Caco-2 (cell line): ENCODE measurements at regions of chr5 and their contacts with region 1.

Region 1: DNA sequence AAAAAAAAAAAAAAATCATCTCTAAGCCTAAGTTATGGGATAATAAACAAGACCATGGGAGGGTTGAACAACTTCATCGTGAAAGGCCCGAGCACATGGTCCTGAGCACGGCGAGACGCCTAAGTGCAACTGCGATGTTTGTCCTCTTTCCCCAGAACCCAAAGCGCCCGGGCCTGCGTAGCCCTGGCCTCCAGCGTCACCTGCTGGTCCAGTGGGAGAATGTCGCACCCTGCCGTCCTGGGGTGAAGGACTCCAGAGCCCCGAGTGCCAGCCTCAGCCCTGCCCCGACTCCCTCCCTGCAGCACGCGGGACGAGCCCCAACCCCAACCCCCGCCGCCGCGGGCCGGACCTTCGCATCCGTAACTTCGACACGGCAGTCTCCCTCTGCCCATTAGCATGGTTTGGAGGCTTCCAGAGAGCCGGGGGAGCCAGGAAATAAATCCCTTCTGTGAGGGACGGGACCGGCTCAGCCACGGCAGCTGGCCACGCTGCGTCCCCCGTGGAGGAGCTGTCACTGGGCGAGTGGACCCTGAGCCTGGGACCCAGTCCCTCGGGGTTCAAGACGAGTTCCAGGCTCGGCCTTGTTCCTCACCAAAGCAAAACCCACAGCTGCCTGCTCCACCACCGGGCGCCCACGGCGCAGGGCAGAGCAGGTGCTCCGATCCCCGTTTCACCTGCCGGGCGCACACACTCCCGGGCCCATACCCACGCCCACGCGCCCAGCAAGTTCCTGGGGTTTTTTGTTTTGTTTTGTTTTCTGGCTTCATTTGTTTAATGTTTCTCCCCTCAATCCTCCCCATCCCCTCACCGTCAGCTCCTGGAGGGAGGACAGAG is 132.5 kb upstream of the HAND1 start:
- DNase-seq: peak; percentile 82 to 84
- H3K4me3 ChIP-seq: peak overlapping the region; percentile 33
- H3K4me3 Mint-ChIP-seq: peak overlapping the region; percentile 60
- H3K27ac Mint-ChIP-seq: no peak overlapping the region
- H3K4me1 ChIP-seq: peaks cover 19% of the 10 kb centered on the region
- H3K4me1 Mint-ChIP-seq: peaks cover 18% of the 10 kb centered on the region
- H3K27me3 ChIP-seq: no peaks in the 10 kb centered on the region; the same call in 1 of the 2 replicates
- H3K27me3 Mint-ChIP-seq: peaks cover 8% of the 10 kb centered on the region
- CTCF ChIP-seq: peak; percentile 95 to 99

Region 2: DNA sequence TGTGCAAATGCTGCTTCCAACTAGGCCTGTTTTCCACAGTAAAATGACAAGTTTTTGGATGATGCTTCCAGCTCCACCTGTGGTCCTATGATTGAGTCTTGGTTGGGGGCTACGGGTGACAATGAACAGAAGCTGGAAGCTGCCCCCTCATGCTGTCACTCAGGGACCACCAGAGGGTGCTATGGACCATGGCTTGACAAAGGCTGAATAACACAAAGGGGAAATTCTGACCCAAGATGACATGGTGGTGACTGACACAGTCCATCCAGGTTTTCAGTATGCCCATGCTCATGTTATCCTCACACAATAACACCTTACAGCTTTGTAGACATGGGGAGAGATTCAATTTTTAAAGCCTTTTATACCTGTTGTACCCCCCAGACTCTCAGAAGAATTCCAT is 188.7 kb before region 1 on chr5:
- CTCF ChIA-PET with region 1: interaction called, 3 read pairs
- POLR2A ChIA-PET with region 1: no interaction called
- intact Hi-C with region 1: loop called (anchors 1 kb)
- DNase-seq: peak in 1 of 2 experiments; percentile 54
- H3K4me3 ChIP-seq: no peak overlapping the region
- H3K4me3 Mint-ChIP-seq: no peak overlapping the region
- H3K27ac Mint-ChIP-seq: no peak overlapping the region
- H3K4me1 ChIP-seq: no peaks in the 10 kb centered on the region
- H3K4me1 Mint-ChIP-seq: no peaks in the 10 kb centered on the region
- H3K27me3 ChIP-seq: no peaks in the 10 kb centered on the region
- H3K27me3 Mint-ChIP-seq: no peaks in the 10 kb centered on the region
- CTCF ChIP-seq: peak; percentile 60 to 71

Region 3: GRCh38 chr5:154583545-154584496 is 26.7 kb before region 1 on chr5:
- CTCF ChIA-PET with region 1: no interaction called
- POLR2A ChIA-PET with region 1: no interaction called
- intact Hi-C with region 1: no loop called
- DNase-seq: peak; percentile 39 to 76
- H3K4me3 ChIP-seq: no peak overlapping the region
- H3K4me3 Mint-ChIP-seq: peak overlapping the region; percentile 17
- H3K27ac Mint-ChIP-seq: peak overlapping the region; percentile 30
- H3K4me1 ChIP-seq: peaks cover 30% of the 10 kb centered on the region
- H3K4me1 Mint-ChIP-seq: peaks cover 20% of the 10 kb centered on the region
- H3K27me3 ChIP-seq: no peaks in the 10 kb centered on the region
- H3K27me3 Mint-ChIP-seq: no peaks in the 10 kb centered on the region
- CTCF ChIP-seq: no peak